Naive thymus-derived CD4-positive, alpha-beta T cell (primary cell): ENCODE measurements at regions of chr10 and their contacts with region 1.

Region 1: GRCh38 chr10:26334932-26335573 is 103.1 kb upstream of the APBB1IP start:
- DNase-seq: peak; percentile 46 to 78 (median 70)
- ATAC-seq: peak; percentile 93
- H3K4me3 ChIP-seq: peak overlapping the region; percentile 43
- H3K4me3 Mint-ChIP-seq: peak overlapping the region; percentile 53 to 92 (median 86)
- H3K27ac ChIP-seq: no peak overlapping the region
- H3K27ac Mint-ChIP-seq: peak overlapping the region in 7 of 9 donors; percentile 2 to 83 (median 60)
- H3K4me1 ChIP-seq: no peaks in the 10 kb centered on the region
- H3K4me1 Mint-ChIP-seq: peaks cover 0 to 12% (median 2%) of the 10 kb centered on the region in 7 donors
- H3K27me3 ChIP-seq: no peaks in the 10 kb centered on the region
- H3K27me3 Mint-ChIP-seq: peaks cover 0 to 2% (median 0%) of the 10 kb centered on the region in 5 donors

Region 2: GRCh38 chr10:25808372-25808771 is 526.7 kb before region 1 on chr10:
- CTCF ChIA-PET with region 1: no interaction called
- POLR2A ChIA-PET with region 1: no interaction called
- intact Hi-C with region 1: no loop called
- DNase-seq: no peak
- ATAC-seq: no peak
- H3K4me3 ChIP-seq: no peak overlapping the region
- H3K4me3 Mint-ChIP-seq: no peak overlapping the region
- H3K27ac ChIP-seq: no peak overlapping the region
- H3K27ac Mint-ChIP-seq: no peak overlapping the region
- H3K4me1 ChIP-seq: no peaks in the 10 kb centered on the region
- H3K4me1 Mint-ChIP-seq: no peaks in the 10 kb centered on the region
- H3K27me3 ChIP-seq: no peaks in the 10 kb centered on the region
- H3K27me3 Mint-ChIP-seq: peaks cover 0 to 23% (median 7%) of the 10 kb centered on the region in 5 donors

Region 3: GRCh38 chr10:26217396-26218086 is 117.5 kb before region 1 on chr10:
- CTCF ChIA-PET with region 1: no interaction called
- POLR2A ChIA-PET with region 1: no interaction called
- intact Hi-C with region 1: no loop called
- DNase-seq: no peak
- ATAC-seq: no peak
- H3K4me3 ChIP-seq: no peak overlapping the region
- H3K4me3 Mint-ChIP-seq: peak overlapping the region in 9 of 10 donors; percentile 32 to 86 (median 62)
- H3K27ac ChIP-seq: no peak overlapping the region
- H3K27ac Mint-ChIP-seq: peak overlapping the region in 1 of 9 donors; percentile 52
- H3K4me1 ChIP-seq: peaks cover 0 to 2% of the 10 kb centered on the region in 2 donors
- H3K4me1 Mint-ChIP-seq: peaks cover 14 to 42% (median 32%) of the 10 kb centered on the region in 7 donors
- H3K27me3 ChIP-seq: peaks cover 0 to 25% of the 10 kb centered on the region in 2 donors
- H3K27me3 Mint-ChIP-seq: peaks cover 81 to 95% (median 92%) of the 10 kb centered on the region in 5 donors

Region 4: GRCh38 chr10:26486991-26487850 is 152.2 kb after region 1 on chr10:
- CTCF ChIA-PET with region 1: no interaction called
- POLR2A ChIA-PET with region 1: no interaction called
- intact Hi-C with region 1: loop called in 1 of 2 experiments (anchors 5 kb)
- DNase-seq: peak in 8 of 9 donors; percentile 50 to 86 (median 66)
- ATAC-seq: peak; percentile 85
- H3K4me3 ChIP-seq: peak overlapping the region; percentile 43
- H3K4me3 Mint-ChIP-seq: peak overlapping the region; percentile 8 to 83 (median 74)
- H3K27ac ChIP-seq: peak overlapping the region; percentile 84
- H3K27ac Mint-ChIP-seq: peak overlapping the region; percentile 90 to 97 (median 94)
- H3K4me1 ChIP-seq: peaks cover 56 to 64% of the 10 kb centered on the region in 2 donors
- H3K4me1 Mint-ChIP-seq: peaks cover 57 to 82% (median 74%) of the 10 kb centered on the region in 7 donors
- H3K27me3 ChIP-seq: no peaks in the 10 kb centered on the region
- H3K27me3 Mint-ChIP-seq: no peaks in the 10 kb centered on the region

Region 5: DNA sequence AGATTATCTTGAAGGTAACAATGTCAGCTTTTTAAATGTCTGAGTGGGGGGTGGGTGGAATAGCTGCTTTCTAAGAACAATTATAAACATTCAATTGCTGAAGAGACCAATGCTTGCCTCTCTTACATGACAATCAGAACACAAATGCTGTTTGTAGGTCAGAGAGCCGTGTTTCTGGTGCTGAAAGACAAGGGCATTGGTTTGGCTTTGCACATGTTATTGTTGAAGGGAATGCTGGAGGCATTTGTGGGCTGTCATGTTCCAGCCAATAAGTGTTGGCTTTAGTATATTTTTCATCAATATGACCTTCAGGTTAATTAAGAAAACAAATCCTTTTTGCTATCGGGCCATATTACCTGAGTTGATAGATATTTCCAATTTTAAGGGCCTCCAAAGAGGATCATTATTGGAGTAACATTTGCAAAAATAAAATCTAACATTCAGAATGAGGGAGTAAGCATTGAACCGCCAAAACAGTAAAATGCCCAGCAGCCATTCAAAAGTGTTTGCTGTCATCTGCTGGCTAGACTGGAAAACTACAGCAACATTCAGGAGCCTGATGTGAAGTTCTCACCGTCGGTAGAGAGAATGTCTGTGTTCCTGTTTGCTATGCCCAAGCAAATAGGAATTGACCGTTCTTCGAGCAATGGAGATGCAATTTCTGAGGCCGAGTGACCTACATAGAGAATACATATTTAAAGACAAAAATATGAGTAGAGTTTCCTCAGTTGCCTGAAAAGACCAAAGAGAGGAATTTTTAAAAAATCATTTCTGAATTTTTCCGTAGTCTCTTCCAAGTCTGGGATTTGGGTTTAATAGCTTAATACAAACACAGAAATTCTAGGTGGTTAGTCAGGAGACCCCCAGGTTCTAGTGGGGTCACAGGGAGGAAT is 221.9 kb after region 1 on chr10:
- CTCF ChIA-PET with region 1: interaction called, 54 read pairs
- POLR2A ChIA-PET with region 1: no interaction called
- intact Hi-C with region 1: loop called (anchors 1 kb)
- DNase-seq: peak in 7 of 9 donors; percentile 15 to 62 (median 57)
- ATAC-seq: peak; percentile 70
- H3K4me3 ChIP-seq: no peak overlapping the region
- H3K4me3 Mint-ChIP-seq: no peak overlapping the region
- H3K27ac ChIP-seq: peak overlapping the region; percentile 24
- H3K27ac Mint-ChIP-seq: peak overlapping the region; percentile 25 to 91 (median 63)
- H3K4me1 ChIP-seq: no peaks in the 10 kb centered on the region
- H3K4me1 Mint-ChIP-seq: peaks cover 11 to 38% (median 29%) of the 10 kb centered on the region in 7 donors
- H3K27me3 ChIP-seq: no peaks in the 10 kb centered on the region
- H3K27me3 Mint-ChIP-seq: no peaks in the 10 kb centered on the region

Region 6: DNA sequence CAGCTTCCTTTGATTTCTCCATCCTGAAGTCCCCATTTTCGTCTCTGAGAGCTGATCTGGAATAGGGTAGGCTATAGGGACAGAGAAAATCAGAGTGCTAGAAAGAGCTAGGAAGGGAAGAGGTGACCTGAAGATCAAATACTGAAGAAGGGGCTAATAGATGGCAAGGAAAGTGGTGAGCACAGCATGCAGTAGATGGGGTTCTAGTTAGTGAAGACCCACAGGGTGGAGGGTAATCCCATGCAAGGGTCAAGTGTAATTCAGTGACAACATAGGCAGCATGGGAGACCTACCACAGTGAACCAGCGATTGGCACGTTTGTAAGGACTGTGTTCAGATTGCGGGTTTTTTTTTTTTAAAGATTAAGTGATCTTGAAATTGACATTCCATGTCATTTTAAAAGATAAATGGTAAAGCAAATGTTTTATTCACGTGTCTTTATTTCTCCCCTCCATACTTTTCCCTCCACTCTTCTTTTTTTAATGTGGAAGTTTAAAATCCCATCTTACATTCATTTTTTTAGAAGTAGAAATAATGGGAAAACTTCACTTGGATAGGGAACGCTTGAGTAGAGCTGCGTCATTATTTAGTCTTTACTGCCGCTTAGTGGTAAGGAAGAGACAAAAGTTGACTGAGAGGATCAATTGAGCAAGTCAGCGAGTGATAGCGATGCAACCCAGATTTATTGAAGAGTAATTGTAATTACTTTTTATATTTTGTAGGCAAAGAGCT is 546.7 kb after region 1 on chr10:
- CTCF ChIA-PET with region 1: interaction called, 7 read pairs
- POLR2A ChIA-PET with region 1: no interaction called
- intact Hi-C with region 1: loop called (anchors 1 kb)
- DNase-seq: peak in 6 of 9 donors; percentile 23 to 60 (median 37)
- ATAC-seq: peak; percentile 87
- H3K4me3 ChIP-seq: no peak overlapping the region
- H3K4me3 Mint-ChIP-seq: no peak overlapping the region
- H3K27ac ChIP-seq: no peak overlapping the region
- H3K27ac Mint-ChIP-seq: no peak overlapping the region
- H3K4me1 ChIP-seq: no peaks in the 10 kb centered on the region
- H3K4me1 Mint-ChIP-seq: peaks cover 0 to 8% (median 0%) of the 10 kb centered on the region in 7 donors
- H3K27me3 ChIP-seq: no peaks in the 10 kb centered on the region
- H3K27me3 Mint-ChIP-seq: peaks cover 4 to 37% (median 13%) of the 10 kb centered on the region in 5 donors